ENCODE measurements at regions of chr9 and their contacts with region 1.

Region 1: DNA sequence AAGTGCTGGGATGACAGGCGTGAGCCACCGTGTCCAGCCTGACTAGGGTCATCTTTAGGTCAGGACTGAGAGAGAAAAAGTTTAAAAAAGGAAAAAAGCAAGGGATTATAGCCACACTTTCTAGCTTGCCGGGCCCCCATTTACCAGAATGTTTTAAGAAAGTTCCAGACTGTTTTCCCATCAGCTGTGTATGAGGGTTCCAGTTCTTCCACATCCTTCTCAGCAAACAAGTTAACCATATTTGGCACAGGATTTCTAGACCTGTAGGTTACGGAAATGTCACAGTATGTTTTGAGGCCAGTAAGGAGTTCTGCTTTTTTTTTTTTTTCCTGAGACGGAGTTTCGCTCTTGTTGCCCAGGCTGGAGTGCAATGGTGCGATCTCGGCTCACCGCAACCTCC is 7.2 kb upstream of the FAM120A start:
- DNase-seq: no peak
- ATAC-seq: no peak
- H3K4me3 ChIP-seq: no peak overlapping the region
- H3K27ac ChIP-seq: no peak overlapping the region
- H3K4me1 ChIP-seq: peaks cover 0 to 6% (median under 1%) of the 10 kb centered on the region in 12 donors
- H3K27me3 ChIP-seq: no peaks in the 10 kb centered on the region
- CTCF ChIP-seq: no peak
- POLR2A ChIP-seq: no peak

Region 2: GRCh38 chr9:93159601-93160471 is 284.5 kb before region 1 on chr9:
- intact Hi-C with region 1: loop called in 1 of 10 experiments (anchors 10 kb)
- DNase-seq: peak; percentile 78 to 91 (median 86)
- ATAC-seq: peak; percentile 80 to 92 (median 90)
- H3K4me3 ChIP-seq: no peak overlapping the region
- H3K27ac ChIP-seq: no peak overlapping the region
- H3K4me1 ChIP-seq: peaks cover 0 to 29% (median 12%) of the 10 kb centered on the region in 12 donors
- H3K27me3 ChIP-seq: no peaks in the 10 kb centered on the region
- CTCF ChIP-seq: peak; percentile 85 to 98 (median 95)
- POLR2A ChIP-seq: no peak

Region 3: GRCh38 chr9:93397661-93398373 is 46.5 kb before region 1 on chr9:
- intact Hi-C with region 1: loop called in 1 of 10 experiments (anchors 2 kb)
- DNase-seq: no peak
- ATAC-seq: peak in 1 of 4 donors; percentile 38
- H3K4me3 ChIP-seq: no peak overlapping the region
- H3K27ac ChIP-seq: no peak overlapping the region
- H3K4me1 ChIP-seq: no peaks in the 10 kb centered on the region
- H3K27me3 ChIP-seq: no peaks in the 10 kb centered on the region
- CTCF ChIP-seq: no peak
- POLR2A ChIP-seq: no peak

Region 4: DNA sequence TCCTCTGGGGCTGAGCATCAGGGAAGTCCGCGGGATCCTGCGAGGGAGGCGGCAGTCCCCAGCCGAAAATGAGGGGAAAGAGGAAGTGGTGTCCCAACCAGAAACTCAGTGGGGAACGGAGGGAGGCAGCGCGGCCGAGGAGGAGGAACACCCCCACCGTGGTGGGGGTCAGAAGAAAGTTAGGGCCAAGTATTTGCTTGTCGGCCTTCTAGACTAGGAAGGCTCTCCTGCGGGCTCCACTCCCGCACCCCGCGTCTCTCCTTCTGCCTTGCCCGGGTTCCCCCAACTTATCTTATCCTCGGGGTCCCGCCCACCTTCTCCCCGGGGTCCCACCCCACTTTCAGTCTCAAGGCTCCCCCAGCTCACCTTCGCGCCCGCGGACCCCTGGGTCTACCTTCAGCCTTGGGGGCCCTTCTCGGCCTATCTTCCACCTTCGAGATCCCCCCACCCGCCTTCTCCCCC is 131.5 kb after region 1 on chr9:
- intact Hi-C with region 1: loop called in 1 of 10 experiments (anchors 10 kb)
- DNase-seq: peak; percentile 59 to 86 (median 63)
- ATAC-seq: peak in 2 of 4 donors; percentile 22 to 59
- H3K4me3 ChIP-seq: peak overlapping the region; percentile 44 to 96 (median 86)
- H3K27ac ChIP-seq: peak overlapping the region; percentile 64 to 97 (median 94)
- H3K4me1 ChIP-seq: peaks cover 0 to 59% (median 44%) of the 10 kb centered on the region in 12 donors
- H3K27me3 ChIP-seq: no peaks in the 10 kb centered on the region
- CTCF ChIP-seq: no peak
- POLR2A ChIP-seq: no peak

Region 5: DNA sequence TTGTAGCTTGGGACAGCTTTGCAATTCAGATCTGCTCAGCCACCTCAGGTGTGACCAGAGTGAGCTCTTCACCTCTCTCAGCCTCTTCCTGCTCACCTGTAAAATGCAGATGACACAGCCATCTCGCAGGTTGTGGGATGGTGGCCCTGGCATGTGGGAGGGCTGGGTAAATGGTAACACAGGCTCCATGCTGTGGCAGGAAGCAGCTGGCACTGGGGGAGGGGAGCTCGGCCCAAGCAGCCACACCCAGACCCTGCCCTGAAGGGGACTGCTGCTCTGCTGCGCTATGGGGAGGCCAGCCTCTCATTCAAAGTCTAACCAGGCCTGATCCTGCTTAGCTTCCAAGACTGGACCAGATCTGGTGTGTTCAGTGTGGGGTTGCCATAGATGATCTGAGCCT is 156.2 kb after region 1 on chr9:
- intact Hi-C with region 1: no loop called
- DNase-seq: no peak
- ATAC-seq: no peak
- H3K4me3 ChIP-seq: no peak overlapping the region
- H3K27ac ChIP-seq: no peak overlapping the region
- H3K4me1 ChIP-seq: peaks cover 0 to 53% (median 25%) of the 10 kb centered on the region in 12 donors
- H3K27me3 ChIP-seq: no peaks in the 10 kb centered on the region
- CTCF ChIP-seq: no peak
- POLR2A ChIP-seq: no peak

Region 6: DNA sequence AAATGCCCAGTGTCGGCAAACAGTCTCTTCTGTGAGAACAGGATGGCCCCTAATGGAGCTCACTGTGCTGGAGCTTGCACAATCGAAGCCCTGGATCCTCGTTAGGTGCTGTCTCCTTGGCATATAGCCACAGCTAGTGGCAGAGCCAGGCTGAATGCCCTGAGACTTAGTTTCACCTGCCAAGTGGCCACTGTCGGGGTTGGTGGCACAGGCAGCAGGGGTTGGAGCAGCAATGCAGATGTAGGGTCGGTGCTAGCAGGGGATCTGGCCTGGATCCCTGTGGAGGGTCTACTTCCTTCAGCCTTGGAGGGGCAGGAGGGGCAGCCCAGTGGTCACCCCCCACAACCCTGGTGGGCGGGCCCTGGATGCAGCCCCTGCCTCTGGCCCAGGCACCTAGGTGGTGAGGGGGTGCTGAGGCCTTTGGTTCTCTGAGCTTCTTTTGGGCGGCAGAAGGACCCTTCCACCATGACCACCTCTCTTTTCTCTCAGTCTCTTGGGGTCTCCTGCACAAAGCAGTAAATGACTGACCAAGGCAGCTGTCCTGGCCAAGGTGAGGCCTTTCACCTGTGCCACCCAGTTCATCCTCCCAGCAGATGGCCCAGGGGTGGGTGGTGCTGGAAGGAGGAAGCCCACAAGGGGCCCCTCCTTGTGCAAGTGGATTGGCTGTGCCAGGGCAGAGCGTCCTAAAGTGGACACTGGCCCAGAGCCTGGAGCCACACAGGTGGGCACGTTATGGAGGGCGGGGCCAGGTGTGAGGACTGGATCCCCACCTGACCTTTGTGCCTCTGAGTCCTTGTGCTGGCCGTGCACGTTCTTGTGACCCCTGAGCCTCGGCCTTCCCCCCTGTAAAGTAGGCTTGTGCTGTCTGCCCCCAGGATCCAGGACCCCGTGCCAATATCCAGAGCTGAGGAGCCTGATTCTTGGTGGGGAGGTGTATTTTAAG is 176.8 kb after region 1 on chr9:
- intact Hi-C with region 1: no loop called
- DNase-seq: peak in 2 of 5 donors; percentile 70 to 75
- ATAC-seq: peak; percentile 71 to 85 (median 78)
- H3K4me3 ChIP-seq: no peak overlapping the region
- H3K27ac ChIP-seq: no peak overlapping the region
- H3K4me1 ChIP-seq: peaks cover 0 to 59% (median 13%) of the 10 kb centered on the region in 12 donors
- H3K27me3 ChIP-seq: no peaks in the 10 kb centered on the region
- CTCF ChIP-seq: no peak
- POLR2A ChIP-seq: no peak